ENCODE measurements at regions of chr9 and their contacts with region 1.

Region 1: GRCh38 chr9:34252670-34253459 is 74.0 kb downstream of the UBAP1 start:
- H3K4me3 ChIP-seq: no peak overlapping the region
- H3K27ac ChIP-seq: no peak overlapping the region
- H3K4me1 ChIP-seq: no peaks in the 10 kb centered on the region
- CTCF ChIP-seq: no peak; the same call in 1 of the 2 replicates

Region 2: DNA sequence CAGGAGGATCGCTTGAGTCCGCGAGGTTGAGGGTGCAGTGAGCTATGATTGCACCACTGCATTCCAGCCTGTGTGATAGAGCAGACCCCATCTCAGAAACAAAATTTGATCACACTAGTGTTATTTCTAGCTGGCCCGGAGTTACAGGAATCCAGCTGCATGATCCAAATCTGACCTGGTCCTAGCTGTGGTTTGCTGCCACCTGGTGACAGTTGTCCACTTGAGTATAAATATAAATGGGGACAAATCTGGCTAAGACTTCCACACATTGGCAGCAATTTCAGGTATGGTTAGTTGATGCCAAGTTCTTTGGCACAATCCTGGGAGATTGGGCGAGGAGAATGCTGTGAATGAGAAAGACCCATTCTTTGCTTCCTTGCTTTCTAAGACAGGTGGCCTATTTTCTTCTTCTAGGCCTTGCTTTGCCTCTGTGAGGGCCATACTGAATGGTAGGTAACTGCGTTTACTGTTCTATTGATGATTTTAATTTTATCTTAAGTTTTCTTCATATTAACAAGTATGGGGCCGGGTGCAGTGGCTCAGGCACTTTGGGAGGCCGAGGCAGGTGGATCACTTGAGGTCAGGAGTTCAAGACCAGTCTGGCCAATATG is 400.5 kb before region 1 on chr9:
- CTCF ChIA-PET with region 1: no interaction called
- POLR2A ChIA-PET with region 1: no interaction called
- H3K4me3 ChIP-seq: no peak overlapping the region
- H3K27ac ChIP-seq: no peak overlapping the region
- H3K4me1 ChIP-seq: peaks cover 15% of the 10 kb centered on the region
- CTCF ChIP-seq: peak; percentile 24; the same call in 1 of the 2 replicates

Region 3: DNA sequence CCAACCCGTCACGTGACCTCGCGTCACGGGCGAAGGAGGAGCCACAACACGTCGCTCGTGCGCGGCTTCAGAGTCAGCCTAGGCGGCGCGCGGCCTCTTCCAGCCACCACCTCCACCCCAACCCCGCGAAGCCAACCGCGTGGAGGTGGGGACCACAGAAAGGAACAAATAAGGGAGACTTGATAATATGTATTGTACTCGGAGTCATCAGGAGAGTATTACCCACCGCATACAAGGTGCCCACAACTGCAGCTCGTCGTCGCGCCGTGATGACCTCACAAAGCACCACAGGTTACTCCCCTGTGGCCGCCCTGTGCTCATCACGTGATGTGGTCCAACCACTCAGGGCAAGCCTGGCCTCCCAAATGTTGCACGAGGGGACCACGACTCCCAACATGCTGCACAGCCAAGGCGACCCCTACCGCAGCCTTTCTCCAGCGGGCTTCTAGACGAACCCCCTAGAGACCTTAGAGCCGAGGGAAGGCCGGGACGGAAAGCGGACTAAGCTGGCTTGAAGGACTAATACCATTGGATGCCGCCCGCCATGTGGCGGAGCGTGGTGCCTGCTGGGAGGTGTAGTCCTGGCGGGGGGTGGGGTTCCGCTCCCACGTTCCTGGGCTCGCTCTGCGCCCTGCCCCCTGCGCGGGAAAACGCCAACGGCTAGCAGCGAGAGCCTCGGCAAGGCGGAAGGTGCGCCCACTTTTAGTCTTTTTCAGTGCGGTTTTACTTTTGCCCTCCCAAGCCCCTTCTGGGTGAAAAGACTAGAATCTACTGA is 203.8 kb before region 1 on chr9:
- CTCF ChIA-PET with region 1: no interaction called
- POLR2A ChIA-PET with region 1: no interaction called
- H3K4me3 ChIP-seq: peak overlapping the region; percentile 87
- H3K27ac ChIP-seq: peak overlapping the region; percentile 88
- H3K4me1 ChIP-seq: 0 out of 2 replicates have a peak, but pooled peaks cover 2% of the 10 kb centered on the region
- CTCF ChIP-seq: peak; percentile 34

Region 4: DNA sequence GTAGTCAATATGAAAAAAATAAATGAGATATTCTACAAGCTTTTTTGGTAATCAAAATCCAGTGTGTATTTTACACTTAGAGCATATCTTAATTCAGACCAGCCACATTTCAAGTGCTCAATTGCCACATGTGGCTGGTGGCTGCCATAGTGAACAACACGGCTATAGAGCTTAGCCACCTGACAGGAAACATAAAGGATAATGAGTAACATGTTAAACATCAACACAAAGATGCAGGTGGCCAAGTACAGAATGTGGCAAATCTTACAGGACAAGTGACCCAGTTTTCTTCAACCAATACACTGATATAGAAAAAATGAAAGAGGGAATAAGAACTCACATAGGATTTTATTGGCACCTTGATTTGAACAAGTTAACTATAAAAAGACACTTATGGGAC is 14.8 kb after region 1 on chr9:
- CTCF ChIA-PET with region 1: interaction called, 20 read pairs
- POLR2A ChIA-PET with region 1: interaction called, 5 read pairs
- H3K4me3 ChIP-seq: no peak overlapping the region
- H3K27ac ChIP-seq: no peak overlapping the region
- H3K4me1 ChIP-seq: no peaks in the 10 kb centered on the region
- CTCF ChIP-seq: no peak

Region 5: GRCh38 chr9:34332076-34332964 is 79.5 kb after region 1 on chr9:
- CTCF ChIA-PET with region 1: interaction called, 13 read pairs
- POLR2A ChIA-PET with region 1: interaction called, 6 read pairs
- H3K4me3 ChIP-seq: no peak overlapping the region
- H3K27ac ChIP-seq: no peak overlapping the region
- H3K4me1 ChIP-seq: no peaks in the 10 kb centered on the region
- CTCF ChIP-seq: peak; percentile 48; the same call in 1 of the 2 replicates

Region 6: DNA sequence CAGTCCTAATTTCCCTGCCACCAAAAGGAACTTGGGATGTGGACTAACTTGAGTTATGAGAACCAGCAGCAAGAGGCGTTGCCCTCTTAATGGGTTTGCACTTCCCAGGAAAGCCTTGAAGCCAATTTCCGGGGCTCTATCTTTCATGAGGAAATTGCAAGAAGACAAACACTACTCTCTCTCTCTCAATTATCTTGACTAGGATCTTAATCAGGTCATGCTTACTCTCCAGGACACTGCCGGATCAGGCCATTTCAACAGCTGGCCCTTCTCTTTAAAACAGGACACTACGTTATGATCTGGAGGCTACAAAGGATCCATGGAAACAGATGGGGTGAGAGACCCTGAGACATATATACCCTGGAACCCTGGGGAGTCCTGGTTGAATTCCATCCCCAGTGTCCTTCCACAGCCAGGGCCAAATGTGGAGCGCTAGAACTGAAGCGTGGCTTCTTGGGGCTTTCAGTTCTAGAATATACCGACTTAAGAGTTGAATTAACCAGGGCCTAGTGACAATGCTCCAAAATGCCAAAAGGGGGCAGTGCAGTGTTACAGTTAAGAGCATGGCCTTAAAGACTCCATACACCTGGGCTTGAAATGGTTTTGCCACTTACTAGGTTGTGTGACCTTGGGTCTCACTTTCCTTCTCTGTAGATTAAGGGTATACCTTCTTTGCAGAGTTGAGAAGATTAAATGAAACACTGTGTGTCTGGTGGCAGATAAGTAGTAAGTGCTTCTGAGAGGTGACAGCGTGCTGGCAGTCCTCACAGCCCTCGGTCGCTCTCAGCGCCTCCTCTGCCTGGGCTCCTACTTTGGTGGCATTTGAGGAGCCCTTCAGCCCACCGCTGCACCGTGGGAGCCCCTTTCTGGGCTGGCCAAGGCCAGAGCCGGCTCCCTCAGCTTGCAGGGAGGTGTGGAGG is 184.4 kb after region 1 on chr9:
- CTCF ChIA-PET with region 1: no interaction called
- POLR2A ChIA-PET with region 1: no interaction called
- H3K4me3 ChIP-seq: no peak overlapping the region
- H3K27ac ChIP-seq: no peak overlapping the region
- H3K4me1 ChIP-seq: no peaks in the 10 kb centered on the region
- CTCF ChIP-seq: 0 out of 2 replicates have a peak, but pooled peaks have one; percentile 14